ENCODE measurements at regions of chr3 and their contacts with region 1.

Region 1: GRCh38 chr3:105686278-105686897 is 182.4 kb downstream of the CBLB start:
- DNase-seq: no peak
- ATAC-seq: peak in 1 of 2 donors; percentile 44
- H3K4me3 ChIP-seq: no peak overlapping the region
- H3K27ac ChIP-seq: no peak overlapping the region
- H3K4me1 ChIP-seq: peaks cover 5% of the 10 kb centered on the region
- H3K27me3 ChIP-seq: no peaks in the 10 kb centered on the region
- CTCF ChIP-seq: peak; percentile 79

Region 2: GRCh38 chr3:105629718-105630117 is 56.7 kb before region 1 on chr3:
- intact Hi-C with region 1: no loop called
- DNase-seq: no peak
- ATAC-seq: no peak
- H3K4me3 ChIP-seq: no peak overlapping the region
- H3K27ac ChIP-seq: no peak overlapping the region
- H3K4me1 ChIP-seq: no peaks in the 10 kb centered on the region
- H3K27me3 ChIP-seq: no peaks in the 10 kb centered on the region
- CTCF ChIP-seq: no peak

Region 3: GRCh38 chr3:105764378-105765307 is 78.3 kb after region 1 on chr3:
- intact Hi-C with region 1: no loop called
- DNase-seq: no peak
- ATAC-seq: peak; percentile 17 to 32
- H3K4me3 ChIP-seq: no peak overlapping the region
- H3K27ac ChIP-seq: no peak overlapping the region
- H3K4me1 ChIP-seq: no peaks in the 10 kb centered on the region
- H3K27me3 ChIP-seq: no peaks in the 10 kb centered on the region
- CTCF ChIP-seq: no peak

Region 4: DNA sequence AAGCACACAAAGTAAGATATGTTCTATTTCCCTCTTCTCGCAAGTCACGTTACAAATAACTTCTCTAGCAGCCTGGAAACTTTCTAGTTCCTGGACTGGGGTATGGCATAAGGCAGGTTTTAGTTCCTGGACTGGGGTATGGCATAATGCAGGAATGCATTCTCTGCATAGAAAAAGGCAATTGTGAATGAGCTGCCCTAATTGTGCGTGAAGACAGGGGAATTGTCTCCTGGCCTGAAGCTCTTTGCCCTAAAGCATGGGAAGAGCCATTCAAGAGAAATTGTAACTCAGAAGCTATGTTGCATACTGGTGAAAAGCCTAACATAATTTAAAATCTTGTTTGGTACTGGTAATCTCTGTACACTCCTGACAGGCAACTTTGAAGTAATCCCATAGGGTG is 236.8 kb after region 1 on chr3:
- intact Hi-C with region 1: no loop called
- DNase-seq: no peak
- ATAC-seq: no peak
- H3K4me3 ChIP-seq: no peak overlapping the region
- H3K27ac ChIP-seq: no peak overlapping the region
- H3K4me1 ChIP-seq: no peaks in the 10 kb centered on the region
- H3K27me3 ChIP-seq: no peaks in the 10 kb centered on the region
- CTCF ChIP-seq: no peak

Region 5: GRCh38 chr3:106232956-106233355 is 546.6 kb after region 1 on chr3:
- intact Hi-C with region 1: no loop called
- DNase-seq: no peak
- ATAC-seq: no peak
- H3K4me3 ChIP-seq: no peak overlapping the region
- H3K27ac ChIP-seq: no peak overlapping the region
- H3K4me1 ChIP-seq: no peaks in the 10 kb centered on the region
- H3K27me3 ChIP-seq: no peaks in the 10 kb centered on the region
- CTCF ChIP-seq: no peak

Region 6: GRCh38 chr3:106609666-106610301 is 923.4 kb after region 1 on chr3:
- intact Hi-C with region 1: loop called (anchors 10 kb)
- DNase-seq: no peak
- ATAC-seq: peak; percentile 84 to 87
- H3K4me3 ChIP-seq: no peak overlapping the region
- H3K27ac ChIP-seq: no peak overlapping the region
- H3K4me1 ChIP-seq: no peaks in the 10 kb centered on the region
- H3K27me3 ChIP-seq: no peaks in the 10 kb centered on the region
- CTCF ChIP-seq: peak; percentile 89